Activated T-helper 1 cell treated with anti-CD3 and anti-CD28 coated beads, Interleukin-12 subunit alpha, Interleukin-12 subunit beta, Interleukin-2, Interleukin-4 antibody, amounts not matched to agents 30 ng/mL and 10 ng/mL and 1 ng/mL, durations not matched to agents 14 hours and 24 hours and 36 hours (primary cell): ENCODE measurements at regions of chr11 and their contacts with region 1.

Region 1: GRCh38 chr11:89487016-89487415 is 4.2 kb downstream of the NOX4 start:
- DNase-seq: no peak
- H3K4me3 Mint-ChIP-seq: no peak overlapping the region
- H3K27ac Mint-ChIP-seq: no peak overlapping the region
- H3K4me1 Mint-ChIP-seq: no peaks in the 10 kb centered on the region
- H3K27me3 Mint-ChIP-seq: peaks cover 17% of the 10 kb centered on the region

Region 2: GRCh38 chr11:89458716-89459115 is 28.3 kb before region 1 on chr11:
- intact Hi-C with region 1: loop called (anchors 2 kb)
- DNase-seq: no peak
- H3K4me3 Mint-ChIP-seq: no peak overlapping the region
- H3K27ac Mint-ChIP-seq: no peak overlapping the region
- H3K4me1 Mint-ChIP-seq: no peaks in the 10 kb centered on the region
- H3K27me3 Mint-ChIP-seq: peaks cover 2% of the 10 kb centered on the region